ENCODE measurements at regions of chr12 and their contacts with region 1.

Region 1: DNA sequence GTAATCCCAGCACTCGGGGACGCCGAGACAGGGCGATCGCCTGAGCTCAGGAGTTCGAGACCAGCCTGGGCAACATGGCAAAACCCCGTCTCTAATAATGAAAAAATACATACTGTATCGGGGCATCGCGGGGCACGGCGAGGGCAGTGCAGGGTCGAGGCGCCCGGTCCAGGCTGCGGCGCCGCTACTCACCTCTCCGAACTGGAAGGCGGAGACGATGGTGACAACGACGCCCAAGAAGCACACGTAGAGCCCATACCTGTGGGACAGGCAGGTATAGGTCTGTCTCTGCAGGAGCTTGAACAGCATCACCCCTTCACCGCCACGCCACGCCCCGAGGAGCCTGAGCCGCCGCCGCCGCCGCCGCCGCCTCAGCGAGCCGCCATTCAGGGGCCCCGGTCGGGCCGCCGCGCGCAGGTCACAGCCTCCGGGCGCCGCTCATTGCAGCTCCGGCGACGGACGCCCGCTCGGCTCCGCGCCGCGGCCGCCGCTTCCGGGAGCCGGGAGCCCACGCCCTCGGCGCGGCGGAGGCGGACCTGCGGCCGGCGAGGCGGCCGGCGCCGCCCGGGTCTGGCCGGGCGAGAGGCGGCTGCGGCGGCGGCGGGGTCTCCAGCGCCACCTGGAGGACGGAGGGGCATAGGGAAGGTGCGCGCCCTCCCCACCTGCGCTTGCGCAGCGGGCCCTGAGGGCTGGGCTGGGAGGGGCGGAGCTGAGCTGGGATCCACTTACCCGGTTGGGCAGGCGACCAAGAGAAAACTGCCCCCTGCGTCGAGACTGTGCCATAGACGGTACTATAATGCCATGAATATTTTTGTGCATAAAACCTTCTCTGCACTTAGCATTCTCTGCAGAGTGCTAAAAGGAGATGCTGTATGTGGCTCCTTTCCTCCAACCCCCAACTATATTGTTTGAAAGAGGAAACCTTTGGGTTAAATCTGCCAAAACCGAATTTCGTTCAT is at the start of gene GNPTAB:
- DNase-seq: peak; percentile 96
- ATAC-seq: peak; percentile 99
- total RNA-seq, gene GNPTAB: 56.2 TPM

Region 2: DNA sequence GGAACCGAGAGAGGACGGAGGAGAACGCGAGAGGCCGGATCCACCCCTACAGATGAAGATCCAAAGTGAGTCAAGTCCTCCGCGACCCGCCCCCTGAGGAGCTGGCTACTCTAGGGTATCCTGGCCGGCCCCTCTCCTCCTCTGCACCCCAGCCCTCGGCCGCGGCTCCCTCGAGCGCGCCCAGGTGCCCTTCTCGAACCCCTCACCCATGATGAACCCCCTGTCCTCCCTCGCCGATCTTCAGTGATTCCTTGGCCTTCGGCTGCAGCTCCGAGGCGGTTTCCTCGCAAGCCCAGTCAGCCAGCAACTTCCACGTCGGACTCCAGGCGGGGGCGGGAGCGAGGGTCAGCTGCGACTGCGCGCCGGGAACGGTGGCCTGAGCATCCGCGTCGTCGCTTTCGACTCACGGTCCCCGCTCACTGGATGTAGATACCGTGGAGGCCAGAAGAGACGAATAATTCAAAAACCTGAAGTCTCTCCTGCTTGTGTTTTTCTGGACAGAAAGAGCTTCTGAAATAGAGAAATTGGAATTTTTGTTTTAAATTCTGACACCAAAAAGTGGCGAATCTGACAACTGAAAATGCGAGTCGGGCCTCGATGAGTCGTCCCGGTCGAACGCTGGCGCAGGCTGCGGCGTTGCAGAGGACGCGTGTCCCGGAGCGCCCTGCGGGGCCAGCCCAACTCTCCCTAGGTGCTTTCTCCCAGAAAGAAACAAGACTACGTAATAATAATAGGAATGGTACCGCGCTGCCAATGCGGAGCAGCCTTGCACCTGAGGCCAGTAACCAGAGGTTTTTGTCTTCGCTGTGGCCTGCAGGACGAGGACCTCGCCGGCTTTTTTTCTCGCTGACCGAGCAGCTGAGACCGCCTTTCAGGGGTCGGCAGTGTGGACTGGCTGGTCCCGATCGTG is 423.0 kb before region 1 on chr12 and contains the start of gene ARL1:
- intact Hi-C with region 1: loop called (anchors 10 kb)
- DNase-seq: peak; percentile 93
- ATAC-seq: peak; percentile 95
- total RNA-seq, gene ARL1: 96.0 TPM

Region 3: DNA sequence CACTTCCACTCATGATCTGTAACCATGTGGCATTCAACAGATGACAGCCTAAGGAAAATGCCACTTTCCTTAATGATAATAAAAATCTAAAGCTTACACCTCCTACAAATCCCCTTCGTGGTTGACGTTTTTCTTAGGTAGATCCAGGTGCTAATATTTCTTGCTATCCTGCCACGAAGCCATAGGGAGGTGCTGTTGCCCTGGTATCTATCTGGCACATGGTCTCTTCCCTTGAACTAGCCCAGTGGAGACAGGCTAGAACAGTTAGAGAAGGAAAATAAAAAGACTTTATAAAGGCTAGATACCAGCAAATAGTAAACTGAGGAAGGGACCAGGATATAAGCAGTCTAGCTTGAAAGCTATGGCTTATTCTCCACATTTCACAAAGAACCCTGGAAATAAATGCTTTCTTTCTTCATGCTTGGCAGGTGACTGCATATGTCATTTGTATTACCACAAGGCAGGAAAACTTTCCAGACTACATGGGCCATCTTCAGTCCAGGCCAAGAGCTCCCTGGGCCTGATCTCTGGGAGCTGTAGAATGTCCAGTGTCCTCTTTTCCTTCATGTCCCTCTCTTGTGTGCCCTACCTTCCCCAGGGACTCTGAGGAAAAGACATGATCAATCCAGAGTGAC is 340.2 kb before region 1 on chr12:
- intact Hi-C with region 1: loop called (anchors 10 kb)
- DNase-seq: no peak
- ATAC-seq: peak; percentile 77

Region 4: GRCh38 chr12:101775816-101776215 is 54.8 kb before region 1 on chr12:
- intact Hi-C with region 1: loop called (anchors 1 kb)
- DNase-seq: no peak
- ATAC-seq: no peak

Region 5: DNA sequence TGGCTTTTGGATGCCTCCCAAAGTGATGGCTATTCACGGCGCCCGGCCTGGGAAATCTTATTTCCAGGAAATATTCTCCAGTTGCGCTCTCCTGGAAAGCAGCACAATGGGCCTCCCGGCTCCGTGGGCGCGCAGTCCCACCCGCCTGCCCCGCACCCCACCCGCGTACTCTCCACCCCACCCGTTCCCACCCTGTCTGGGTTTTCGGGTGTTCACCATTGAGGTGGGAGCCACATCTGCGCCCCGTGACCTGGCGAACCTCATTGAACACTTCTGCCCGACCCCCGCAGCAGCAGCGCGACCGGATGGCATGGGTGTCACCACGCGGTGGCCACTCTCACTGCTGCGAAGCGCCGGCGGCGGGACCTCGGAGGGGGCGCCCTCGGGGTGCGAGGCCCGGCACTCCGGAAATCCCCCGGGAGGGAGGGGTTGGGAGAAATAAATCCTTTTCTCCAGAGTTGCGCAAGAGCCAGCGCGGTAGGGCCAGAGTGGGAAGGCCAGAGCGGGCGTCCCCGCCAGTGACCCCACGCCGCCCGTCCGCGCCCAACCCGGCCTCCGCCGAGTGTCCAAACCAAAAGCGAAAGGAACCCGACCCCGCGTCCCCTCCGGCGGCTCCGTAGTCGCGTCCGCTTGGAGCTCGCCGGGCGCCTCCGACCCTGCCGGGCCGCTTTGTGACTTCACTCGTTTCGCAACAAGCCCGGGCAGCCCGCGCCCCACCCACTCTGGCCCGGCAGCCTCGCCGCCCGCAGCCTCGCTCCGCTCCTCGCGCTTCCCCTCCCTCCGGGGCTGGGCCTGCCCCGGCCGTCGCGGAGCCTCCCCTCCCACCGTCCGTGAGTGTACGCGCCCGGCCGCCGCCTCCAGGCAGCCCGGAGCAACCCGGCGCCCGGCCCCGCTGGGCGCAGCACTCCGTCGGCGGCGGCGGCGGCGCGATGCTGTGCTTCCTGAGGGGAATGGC is 46.5 kb after region 1 on chr12 and contains the start of gene DRAM1:
- intact Hi-C with region 1: loop called (anchors 2 kb)
- DNase-seq: peak; percentile 97
- ATAC-seq: peak; percentile 97
- total RNA-seq, gene DRAM1: 6.2 TPM

Region 6: DNA sequence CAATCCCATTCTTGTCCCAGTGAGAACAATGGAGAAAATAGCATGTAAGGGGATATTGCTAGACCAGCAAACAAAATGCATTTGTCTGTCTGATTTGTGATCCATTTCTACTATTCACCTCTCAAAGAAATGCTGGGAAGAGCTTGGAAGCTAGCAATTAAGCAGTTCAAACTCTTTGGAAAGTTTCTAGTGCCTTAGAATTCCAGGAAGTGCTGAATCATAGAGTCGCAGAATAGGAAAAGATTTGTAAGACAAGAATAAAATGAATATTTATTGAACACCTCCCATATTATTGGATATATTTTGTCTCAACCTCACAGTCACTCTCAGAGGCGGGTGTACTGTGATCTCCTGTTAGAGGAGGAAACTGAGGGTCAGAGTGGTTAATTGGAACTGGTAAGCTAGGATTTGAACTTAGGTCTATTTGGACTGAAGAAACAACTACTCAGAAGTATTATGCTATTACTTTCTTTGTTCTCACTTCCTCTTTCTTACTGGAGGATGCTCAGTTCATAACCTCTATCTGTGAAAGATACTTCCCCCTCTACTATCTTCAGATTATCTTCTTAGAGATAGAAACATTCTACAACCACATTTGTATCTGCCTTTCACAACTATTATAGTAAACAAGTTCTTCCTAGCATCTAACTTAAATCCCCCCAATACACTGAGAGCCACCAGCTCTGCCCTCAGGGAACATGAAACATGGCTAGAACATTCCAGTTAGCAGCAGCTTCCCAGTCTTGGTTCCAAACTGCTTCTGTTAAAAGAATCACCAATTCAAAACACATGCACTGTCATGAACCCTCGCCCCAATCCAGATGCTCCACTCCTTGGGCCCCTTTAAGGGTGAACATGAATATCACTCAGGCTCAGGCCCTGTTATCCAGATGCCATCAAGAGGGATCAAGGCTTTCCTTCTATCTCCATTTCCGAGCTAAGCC is 110.9 kb after region 1 on chr12:
- intact Hi-C with region 1: no loop called
- DNase-seq: no peak
- ATAC-seq: no peak

Measured in Right ventricle myocardium inferior (tissue), 1 donor.